Transverse colon (tissue), 4 donors: ENCODE measurements at regions of chr18 and their contacts with region 1.

Region 1: GRCh38 chr18:9047545-9048114 is 54.9 kb upstream of the NDUFV2 start:
- DNase-seq: no peak
- H3K4me3 ChIP-seq: no peak overlapping the region
- H3K27ac ChIP-seq: no peak overlapping the region
- H3K4me1 ChIP-seq: no peaks in the 10 kb centered on the region
- H3K27me3 ChIP-seq: no peaks in the 10 kb centered on the region
- CTCF ChIP-seq: no peak
- EP300 ChIP-seq: no peak
- POLR2A ChIP-seq: no peak

Region 2: GRCh38 chr18:8998481-8999217 is 49.0 kb before region 1 on chr18:
- in situ Hi-C with region 1: no loop called
- intact Hi-C with region 1: loop called (anchors 2 kb)
- DNase-seq: no peak
- H3K4me3 ChIP-seq: no peak overlapping the region
- H3K27ac ChIP-seq: peak overlapping the region in 3 of 4 donors; percentile 10 to 41 (median 29)
- H3K4me1 ChIP-seq: no peaks in the 10 kb centered on the region
- H3K27me3 ChIP-seq: peaks cover 7% of the 10 kb centered on the region
- CTCF ChIP-seq: no peak
- EP300 ChIP-seq: no peak
- POLR2A ChIP-seq: no peak